ENCODE measurements at regions of chrX and their contacts with region 1.

Region 1: DNA sequence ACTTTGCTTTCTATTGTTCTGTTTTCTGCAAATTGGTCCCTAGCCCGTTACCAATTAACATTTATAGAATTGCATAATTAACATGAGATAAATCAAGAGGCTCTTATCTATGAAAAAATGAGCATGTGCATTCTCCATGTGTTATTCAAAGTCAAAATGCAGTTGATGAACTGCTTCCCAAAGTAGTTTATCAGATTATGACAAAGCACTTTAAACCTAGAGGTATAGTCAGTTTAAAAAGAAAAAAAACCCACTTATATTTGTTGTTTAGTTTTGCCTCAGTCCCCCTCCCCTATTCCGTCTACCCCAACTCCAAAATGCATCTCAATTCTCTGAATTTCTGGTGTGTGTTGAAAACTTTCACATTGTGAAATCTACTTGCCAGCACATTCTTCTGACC is 119.5 kb downstream of the ATXN3L start:
- DNase-seq: no peak
- H3K4me3 ChIP-seq: no peak overlapping the region
- H3K27ac ChIP-seq: no peak overlapping the region
- H3K4me1 ChIP-seq: no peaks in the 10 kb centered on the region
- H3K27me3 ChIP-seq: peaks cover 0 to 12% of the 10 kb centered on the region in 2 donors
- CTCF ChIP-seq: no peak
- POLR2A ChIP-seq: no peak

Region 2: GRCh38 chrX:13212191-13212651 is 11.8 kb after region 1 on chrX:
- intact Hi-C with region 1: loop called (anchors 1 kb)
- DNase-seq: no peak
- H3K4me3 ChIP-seq: no peak overlapping the region
- H3K27ac ChIP-seq: peak overlapping the region in 1 of 2 donors; percentile 50
- H3K4me1 ChIP-seq: no peaks in the 10 kb centered on the region
- H3K27me3 ChIP-seq: peaks cover 0 to 15% of the 10 kb centered on the region in 2 donors
- CTCF ChIP-seq: no peak
- POLR2A ChIP-seq: no peak

Region 3: GRCh38 chrX:13235930-13236329 is 35.5 kb after region 1 on chrX:
- intact Hi-C with region 1: no loop called
- DNase-seq: no peak
- H3K4me3 ChIP-seq: no peak overlapping the region
- H3K27ac ChIP-seq: no peak overlapping the region
- H3K4me1 ChIP-seq: no peaks in the 10 kb centered on the region
- H3K27me3 ChIP-seq: peaks cover 0 to 48% of the 10 kb centered on the region in 2 donors
- CTCF ChIP-seq: no peak
- POLR2A ChIP-seq: no peak